ENCODE measurements at regions of chrX and their contacts with region 1.

Region 1: GRCh38 chrX:134969726-134970125 is 21.1 kb upstream of the SMIM10 start:
- DNase-seq: no peak
- ATAC-seq: no peak
- H3K4me3 Mint-ChIP-seq: no peak overlapping the region
- H3K27ac Mint-ChIP-seq: no peak overlapping the region
- H3K4me1 Mint-ChIP-seq: no peaks in the 10 kb centered on the region
- H3K27me3 Mint-ChIP-seq: no peaks in the 10 kb centered on the region

Region 2: DNA sequence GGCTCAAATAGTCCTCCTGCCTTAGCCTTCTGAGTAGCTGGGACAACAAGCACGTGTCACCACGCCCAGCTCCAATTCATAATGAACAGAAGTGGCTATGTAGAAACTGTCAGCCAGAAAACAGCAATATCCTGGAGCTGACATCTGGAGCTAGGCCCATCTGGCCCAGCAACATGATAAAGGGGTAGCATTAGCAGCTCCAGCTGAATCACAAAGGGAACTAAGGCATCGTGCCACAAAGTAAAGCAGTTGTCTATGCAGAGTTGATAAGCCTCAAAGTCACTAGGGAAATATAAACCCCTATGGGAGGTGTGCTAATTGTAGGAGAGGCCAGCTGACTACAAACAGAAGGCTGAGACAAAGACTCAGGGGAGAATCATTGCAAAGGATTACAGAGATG is 1283.9 kb before region 1 on chrX:
- CTCF ChIA-PET with region 1: no interaction called
- POLR2A ChIA-PET with region 1: no interaction called
- intact Hi-C with region 1: no loop called
- DNase-seq: no peak
- ATAC-seq: no peak
- H3K4me3 Mint-ChIP-seq: no peak overlapping the region
- H3K27ac Mint-ChIP-seq: no peak overlapping the region
- H3K4me1 Mint-ChIP-seq: peaks cover 3% of the 10 kb centered on the region
- H3K27me3 Mint-ChIP-seq: no peaks in the 10 kb centered on the region

Region 3: DNA sequence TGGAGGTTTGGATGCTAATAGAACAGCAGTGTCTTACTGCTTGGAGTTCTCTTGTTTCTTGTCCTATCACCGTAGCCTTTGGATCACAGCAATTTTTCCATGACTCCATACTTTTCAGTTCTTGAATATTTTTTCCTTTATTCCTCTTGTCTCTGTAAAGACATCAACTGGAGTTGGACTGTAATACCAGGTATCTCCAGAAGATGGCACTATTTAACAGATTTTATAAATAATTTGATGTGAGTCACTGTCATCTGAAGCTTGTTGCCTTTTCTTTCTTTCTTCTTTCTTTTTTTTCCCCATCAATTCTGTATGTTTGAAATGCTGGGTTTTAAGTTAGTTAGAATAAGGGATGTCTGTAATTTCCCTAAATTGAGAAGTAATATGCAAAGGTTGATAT is 485.7 kb before region 1 on chrX:
- CTCF ChIA-PET with region 1: no interaction called
- POLR2A ChIA-PET with region 1: interaction called, 10 read pairs
- intact Hi-C with region 1: no loop called
- DNase-seq: no peak
- ATAC-seq: no peak
- H3K4me3 Mint-ChIP-seq: no peak overlapping the region
- H3K27ac Mint-ChIP-seq: no peak overlapping the region
- H3K4me1 Mint-ChIP-seq: no peaks in the 10 kb centered on the region
- H3K27me3 Mint-ChIP-seq: no peaks in the 10 kb centered on the region

Region 4: GRCh38 chrX:135003876-135004623 is 34.3 kb after region 1 on chrX:
- CTCF ChIA-PET with region 1: interaction called, 3 read pairs
- POLR2A ChIA-PET with region 1: no interaction called
- intact Hi-C with region 1: loop called (anchors 1 kb)
- DNase-seq: peak; percentile 94
- ATAC-seq: peak; percentile 98
- H3K4me3 Mint-ChIP-seq: peak overlapping the region; percentile 78
- H3K27ac Mint-ChIP-seq: peak overlapping the region; percentile 69
- H3K4me1 Mint-ChIP-seq: peaks cover 14% of the 10 kb centered on the region
- H3K27me3 Mint-ChIP-seq: no peaks in the 10 kb centered on the region

Region 5: DNA sequence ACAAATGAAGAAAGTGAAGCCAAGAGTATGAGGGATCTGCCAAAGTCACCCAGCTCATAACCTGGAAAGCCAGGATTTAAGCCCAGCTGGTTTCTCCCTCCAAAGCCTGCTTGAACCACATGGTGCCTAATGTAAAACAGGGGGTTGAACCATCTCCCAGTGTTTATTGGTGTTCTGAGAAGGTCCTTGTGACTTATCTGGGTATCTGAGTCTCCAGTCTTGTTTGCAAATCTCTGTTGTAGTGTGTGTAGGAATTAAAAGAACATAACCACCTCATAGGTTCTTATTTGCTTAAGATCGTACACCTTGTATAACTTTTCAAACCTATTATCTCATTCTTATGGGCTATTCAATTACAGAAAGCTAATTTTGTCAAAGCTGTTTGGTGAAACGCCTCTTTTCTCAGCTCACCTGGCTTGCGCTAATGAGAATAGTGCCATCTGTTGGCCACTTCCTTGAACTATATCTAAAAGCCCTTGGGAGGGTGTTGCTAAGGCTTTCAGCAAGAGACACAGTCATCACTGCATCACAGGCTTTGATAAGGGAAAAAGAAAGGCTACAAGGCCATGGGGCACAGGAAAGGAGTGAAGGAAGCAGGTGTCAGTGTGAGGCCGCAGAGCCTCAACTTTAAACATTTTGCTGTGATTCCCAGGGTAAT is 116.6 kb after region 1 on chrX:
- CTCF ChIA-PET with region 1: interaction called, 7 read pairs
- POLR2A ChIA-PET with region 1: no interaction called
- intact Hi-C with region 1: loop called (anchors 1 kb)
- DNase-seq: peak; percentile 46
- ATAC-seq: peak; percentile 98
- H3K4me3 Mint-ChIP-seq: no peak overlapping the region
- H3K27ac Mint-ChIP-seq: peak overlapping the region; percentile 67
- H3K4me1 Mint-ChIP-seq: peaks cover 6% of the 10 kb centered on the region
- H3K27me3 Mint-ChIP-seq: no peaks in the 10 kb centered on the region

Region 6: GRCh38 chrX:135185795-135186443 is 216.2 kb after region 1 on chrX:
- CTCF ChIA-PET with region 1: no interaction called
- POLR2A ChIA-PET with region 1: no interaction called
- intact Hi-C with region 1: loop called in 1 of 2 experiments (anchors 1 kb)
- DNase-seq: peak; percentile 46
- ATAC-seq: peak; percentile 83
- H3K4me3 Mint-ChIP-seq: no peak overlapping the region
- H3K27ac Mint-ChIP-seq: no peak overlapping the region
- H3K4me1 Mint-ChIP-seq: no peaks in the 10 kb centered on the region
- H3K27me3 Mint-ChIP-seq: peaks cover 20% of the 10 kb centered on the region

Region 7: GRCh38 chrX:135477576-135477975 is 507.9 kb after region 1 on chrX:
- CTCF ChIA-PET with region 1: no interaction called
- POLR2A ChIA-PET with region 1: no interaction called
- intact Hi-C with region 1: loop called (anchors 10 kb)
- DNase-seq: peak; percentile 63
- ATAC-seq: peak; percentile 77
- H3K4me3 Mint-ChIP-seq: no peak overlapping the region
- H3K27ac Mint-ChIP-seq: no peak overlapping the region
- H3K4me1 Mint-ChIP-seq: peaks cover 2% of the 10 kb centered on the region
- H3K27me3 Mint-ChIP-seq: no peaks in the 10 kb centered on the region